Dendritic cell treated with granulocyte-macrophage colony-stimulating factor and Interleukin-4, amounts not matched to agents 40 ng/mL and 50 ng/mL, for 4 days (primary cell): ENCODE measurements at regions of chr13 and their contacts with region 1.

Region 1: DNA sequence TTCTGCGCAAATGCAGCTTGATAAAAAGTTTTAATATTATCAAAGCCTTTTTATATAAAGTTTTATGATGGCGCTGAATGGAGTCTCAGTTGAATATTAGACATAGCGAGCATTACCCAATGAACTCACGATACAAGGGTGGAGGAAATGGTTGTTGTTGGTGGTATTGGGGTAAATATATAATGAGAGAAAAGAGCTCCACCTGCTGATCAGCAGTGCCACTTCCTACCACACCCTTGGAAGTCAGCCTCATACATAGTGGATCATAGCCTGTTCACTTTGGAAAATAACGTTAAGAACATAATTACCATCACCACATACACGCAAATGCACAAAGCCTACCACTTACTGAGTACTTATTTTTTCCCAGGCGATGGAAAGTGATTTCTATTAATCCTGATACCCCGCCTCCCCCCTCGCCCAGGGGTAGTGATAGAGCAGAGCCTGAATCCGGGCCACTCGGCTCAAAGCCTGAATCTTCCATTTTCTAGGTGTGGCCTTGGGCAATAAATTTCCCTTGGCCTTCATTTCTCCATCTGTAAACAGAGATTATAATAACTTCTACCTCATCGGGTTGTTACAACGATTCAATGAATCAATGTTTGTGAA is 358.3 kb downstream of the KLF5 start:
- H3K4me3 Mint-ChIP-seq: no peak overlapping the region
- H3K27ac Mint-ChIP-seq: no peak overlapping the region
- H3K4me1 Mint-ChIP-seq: no peaks in the 10 kb centered on the region
- H3K27me3 Mint-ChIP-seq: no peaks in the 10 kb centered on the region

Region 2: DNA sequence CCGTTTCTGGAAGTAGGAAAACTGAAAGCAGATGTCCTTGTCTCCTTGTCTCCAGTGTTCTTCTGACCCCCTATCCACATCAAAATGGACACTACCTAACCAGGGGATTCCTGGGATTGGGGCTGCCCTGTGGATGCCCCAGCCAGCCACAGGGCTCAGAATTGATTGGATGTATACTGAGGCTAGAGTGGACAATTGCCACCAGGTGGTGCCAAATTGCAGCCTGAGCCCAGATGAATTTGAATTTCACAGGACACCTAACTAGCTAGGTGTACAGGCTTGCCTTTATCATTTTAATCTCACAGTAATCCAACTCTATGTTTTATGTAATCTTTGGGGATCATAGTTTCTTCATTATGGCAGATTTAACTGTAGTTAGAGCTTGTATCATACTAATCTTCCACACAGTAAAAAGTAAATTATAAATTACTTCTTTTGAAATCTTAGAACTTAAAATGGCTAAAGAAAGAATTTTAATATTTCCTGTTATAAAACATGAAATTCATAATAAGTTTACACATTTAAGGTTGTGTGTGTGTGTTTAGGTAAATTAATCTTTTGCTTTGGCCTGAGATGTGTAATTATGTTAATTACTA is 577.2 kb before region 1 on chr13:
- intact Hi-C with region 1: loop called (anchors 5 kb)
- H3K4me3 Mint-ChIP-seq: no peak overlapping the region
- H3K27ac Mint-ChIP-seq: no peak overlapping the region
- H3K4me1 Mint-ChIP-seq: no peaks in the 10 kb centered on the region
- H3K27me3 Mint-ChIP-seq: no peaks in the 10 kb centered on the region

Region 3: DNA sequence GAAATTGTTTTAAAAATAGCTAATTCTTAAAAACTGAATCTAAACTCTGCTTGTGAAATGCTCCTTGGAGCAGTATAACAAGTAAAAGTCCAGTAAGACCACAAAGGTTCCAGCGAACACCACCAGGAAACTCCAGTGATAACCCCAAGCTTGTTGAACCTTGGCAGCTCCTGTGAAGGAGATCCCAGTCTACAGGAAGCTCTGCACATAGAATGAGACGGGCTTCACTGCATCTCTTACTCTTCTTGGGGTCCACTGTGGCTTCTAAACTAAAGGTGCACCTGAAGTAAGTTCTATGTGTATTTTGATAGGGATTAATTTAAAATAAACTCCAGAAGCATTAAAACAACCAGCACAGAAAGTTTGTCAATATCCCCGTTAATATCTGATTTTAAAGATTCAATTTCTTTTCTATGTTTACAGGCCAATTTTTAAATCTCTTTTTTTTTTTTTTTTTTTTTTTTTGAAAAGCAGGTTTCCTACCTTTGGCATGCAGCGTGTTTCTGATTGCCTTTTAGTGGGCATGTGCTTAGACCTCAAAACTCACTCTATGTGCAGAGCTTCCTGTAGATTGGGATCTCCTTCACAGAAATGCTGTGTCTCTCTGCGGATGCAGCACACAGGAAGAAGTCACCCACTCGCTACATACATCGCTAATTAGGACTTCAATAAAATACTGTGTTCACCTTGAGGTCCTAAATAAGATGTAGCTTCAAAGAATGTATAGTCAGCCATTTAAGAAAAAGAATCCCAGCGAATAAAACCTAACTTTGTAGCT is 208.6 kb after region 1 on chr13:
- intact Hi-C with region 1: no loop called
- H3K4me3 Mint-ChIP-seq: no peak overlapping the region
- H3K27ac Mint-ChIP-seq: no peak overlapping the region
- H3K4me1 Mint-ChIP-seq: no peaks in the 10 kb centered on the region
- H3K27me3 Mint-ChIP-seq: no peaks in the 10 kb centered on the region